Activated T-helper 1 cell treated with anti-CD3 and anti-CD28 coated beads, Interleukin-12 subunit alpha, Interleukin-12 subunit beta, Interleukin-2, Interleukin-4 antibody, amounts not matched to agents 30 ng/mL and 10 ng/mL and 1 ng/mL, durations not matched to agents 14 hours and 24 hours and 36 hours (primary cell): ENCODE measurements at regions of chr16 and their contacts with region 1.

Region 1: DNA sequence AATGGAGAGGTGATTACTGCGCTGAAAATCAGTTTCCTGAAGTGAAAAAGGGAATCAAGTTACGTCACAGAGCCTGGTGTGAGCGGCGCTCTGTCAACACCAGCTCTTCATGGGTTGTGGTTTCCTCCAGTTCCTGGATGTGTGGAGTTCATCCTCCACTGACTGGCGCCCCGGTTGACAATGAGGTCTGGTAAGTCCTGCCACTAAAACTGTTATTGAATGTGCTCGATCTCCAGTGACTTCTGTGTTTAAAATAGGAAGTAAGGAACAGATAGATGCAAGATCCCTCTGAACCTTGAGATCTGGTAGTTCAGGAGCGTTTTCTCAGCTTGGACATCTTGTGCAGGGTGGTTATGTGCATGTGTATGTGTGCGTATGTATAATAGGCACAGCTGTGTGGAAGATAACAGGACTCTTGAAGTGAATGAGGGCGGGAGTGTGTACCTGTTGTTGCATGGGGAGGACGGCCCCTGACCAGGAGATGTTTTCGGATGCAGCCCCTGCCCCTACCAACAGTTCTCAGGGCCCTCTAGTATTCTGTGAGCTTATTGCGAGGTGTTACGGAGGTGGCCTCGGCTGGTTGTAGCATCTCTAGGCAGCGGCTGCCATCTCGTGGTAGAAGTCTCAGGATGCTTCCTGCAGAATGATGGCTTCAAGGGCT is 22.0 kb upstream of the GOT2 start:
- DNase-seq: peak; percentile 65
- H3K4me3 Mint-ChIP-seq: peak overlapping the region; percentile 32
- H3K27ac Mint-ChIP-seq: peak overlapping the region; percentile 53
- H3K4me1 Mint-ChIP-seq: peaks cover 10% of the 10 kb centered on the region
- H3K27me3 Mint-ChIP-seq: peaks cover 5% of the 10 kb centered on the region

Region 2: GRCh38 chr16:58299757-58300349 is 456.3 kb before region 1 on chr16:
- intact Hi-C with region 1: loop called (anchors 1 kb)
- DNase-seq: peak; percentile 6
- H3K4me3 Mint-ChIP-seq: no peak overlapping the region
- H3K27ac Mint-ChIP-seq: no peak overlapping the region
- H3K4me1 Mint-ChIP-seq: no peaks in the 10 kb centered on the region
- H3K27me3 Mint-ChIP-seq: peaks cover 10% of the 10 kb centered on the region

Region 3: DNA sequence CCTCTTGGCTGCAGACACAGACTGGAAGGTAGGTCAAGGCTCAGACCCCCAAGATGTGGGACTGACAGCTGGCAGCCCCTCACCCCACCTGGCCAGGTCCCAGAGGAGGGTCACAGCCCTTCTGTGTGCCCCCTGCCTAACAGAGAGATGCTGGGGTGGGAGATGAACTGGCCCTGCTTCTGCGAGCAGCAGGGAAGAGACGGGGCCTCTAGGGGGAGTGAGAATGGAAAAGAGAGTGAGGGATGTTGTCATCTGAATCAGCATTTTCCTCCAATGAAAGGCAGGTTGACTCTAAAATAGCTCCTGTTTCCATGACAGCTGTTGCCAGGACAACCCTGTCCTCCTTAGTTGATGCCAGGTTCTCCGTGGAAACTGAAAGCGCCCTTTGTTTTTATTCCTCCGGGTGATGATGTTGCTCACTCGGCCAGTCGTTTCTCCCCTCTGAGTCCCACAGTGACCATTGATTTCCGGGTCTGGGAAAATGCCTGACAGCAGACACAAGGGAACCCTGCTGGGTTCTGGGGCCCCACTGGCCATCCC is 261.1 kb before region 1 on chr16:
- intact Hi-C with region 1: loop called (anchors 5 kb)
- DNase-seq: peak; percentile 65
- H3K4me3 Mint-ChIP-seq: no peak overlapping the region
- H3K27ac Mint-ChIP-seq: peak overlapping the region; percentile 87
- H3K4me1 Mint-ChIP-seq: peaks cover 9% of the 10 kb centered on the region
- H3K27me3 Mint-ChIP-seq: peaks cover 1% of the 10 kb centered on the region

Region 4: GRCh38 chr16:58678716-58679115 is 77.4 kb before region 1 on chr16:
- intact Hi-C with region 1: loop called (anchors 1 kb)
- DNase-seq: no peak
- H3K4me3 Mint-ChIP-seq: no peak overlapping the region
- H3K27ac Mint-ChIP-seq: no peak overlapping the region
- H3K4me1 Mint-ChIP-seq: peaks cover 9% of the 10 kb centered on the region
- H3K27me3 Mint-ChIP-seq: no peaks in the 10 kb centered on the region

Region 5: DNA sequence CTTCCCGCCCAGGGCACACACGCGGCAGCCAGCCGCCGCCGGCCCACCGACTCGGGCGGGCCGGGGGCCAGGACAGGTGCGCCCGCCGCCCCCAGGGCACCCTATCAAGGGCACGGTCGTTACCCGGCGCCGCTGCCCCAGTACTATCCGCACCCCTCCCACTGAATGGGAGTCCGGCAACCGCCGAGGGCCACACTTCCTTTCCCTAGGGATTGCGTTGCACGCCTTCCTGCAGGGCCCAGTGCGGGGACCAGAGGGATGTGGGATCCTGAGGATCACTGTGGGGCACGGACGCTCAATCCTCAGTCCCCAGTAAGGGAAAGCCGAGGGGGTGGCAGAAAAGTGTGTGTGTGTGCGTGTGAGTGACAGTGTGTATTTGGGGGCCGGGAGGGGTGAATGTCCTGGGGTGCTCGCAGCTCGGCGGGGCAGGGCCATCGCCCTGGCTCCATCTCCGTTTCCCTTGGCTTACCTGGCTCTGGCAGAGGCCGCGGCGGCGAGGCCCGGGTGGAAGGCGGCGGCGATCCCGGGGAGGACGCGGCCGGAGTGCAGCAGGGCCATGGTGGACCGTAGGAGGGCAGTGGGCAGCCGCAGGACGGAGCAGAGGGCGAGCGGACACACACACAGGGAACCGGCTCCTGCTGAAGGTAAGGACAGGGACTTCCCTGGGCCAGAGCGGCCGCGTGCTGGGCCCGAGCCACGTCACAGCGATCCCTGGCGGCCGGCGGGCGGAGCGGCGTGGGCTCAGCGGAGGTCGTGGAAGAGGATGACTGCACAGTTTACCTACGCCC is 22.3 kb before region 1 on chr16 and contains the start of gene GOT2:
- intact Hi-C with region 1: loop called (anchors 1 kb)
- DNase-seq: peak; percentile 78
- H3K4me3 Mint-ChIP-seq: peak within 1 kb of the TSS; percentile 100
- H3K27ac Mint-ChIP-seq: peak within 1 kb of the TSS; percentile 99
- H3K4me1 Mint-ChIP-seq: peaks cover 27% of the 10 kb centered on the region
- H3K27me3 Mint-ChIP-seq: no peaks in the 10 kb centered on the region
- total RNA-seq, gene GOT2: 135 and 137 TPM in 2 replicates